Caco-2 (cell line): ENCODE measurements at regions of chr1 and their contacts with region 1.

Region 1: GRCh38 chr1:218345673-218346390 is 696 bp downstream of the TGFB2 start:
- DNase-seq: peak; percentile 63 to 66
- H3K4me3 ChIP-seq: peak overlapping the region; percentile 81
- H3K4me3 Mint-ChIP-seq: no peak overlapping the region
- H3K27ac Mint-ChIP-seq: no peak overlapping the region
- H3K4me1 ChIP-seq: peaks cover 14% of the 10 kb centered on the region
- H3K4me1 Mint-ChIP-seq: peaks cover 6% of the 10 kb centered on the region
- H3K27me3 ChIP-seq: no peaks in the 10 kb centered on the region
- H3K27me3 Mint-ChIP-seq: no peaks in the 10 kb centered on the region
- CTCF ChIP-seq: no peak

Region 2: GRCh38 chr1:218330043-218330623 is 15.7 kb before region 1 on chr1:
- CTCF ChIA-PET with region 1: no interaction called
- POLR2A ChIA-PET with region 1: no interaction called
- intact Hi-C with region 1: loop called (anchors 1 kb)
- DNase-seq: peak in 1 of 2 experiments; percentile 9
- H3K4me3 ChIP-seq: no peak overlapping the region
- H3K4me3 Mint-ChIP-seq: no peak overlapping the region
- H3K27ac Mint-ChIP-seq: no peak overlapping the region
- H3K4me1 ChIP-seq: no peaks in the 10 kb centered on the region
- H3K4me1 Mint-ChIP-seq: no peaks in the 10 kb centered on the region
- H3K27me3 ChIP-seq: no peaks in the 10 kb centered on the region
- H3K27me3 Mint-ChIP-seq: no peaks in the 10 kb centered on the region
- CTCF ChIP-seq: peak; percentile 28 to 69

Region 3: GRCh38 chr1:218380151-218380977 is 34.5 kb after region 1 on chr1:
- CTCF ChIA-PET with region 1: interaction called, 7 read pairs
- POLR2A ChIA-PET with region 1: interaction called, 4 read pairs
- intact Hi-C with region 1: loop called (anchors 2 kb)
- DNase-seq: peak; percentile 79 to 82
- H3K4me3 ChIP-seq: no peak overlapping the region
- H3K4me3 Mint-ChIP-seq: peak overlapping the region; percentile 20
- H3K27ac Mint-ChIP-seq: peak overlapping the region; percentile 89
- H3K4me1 ChIP-seq: peaks cover 49% of the 10 kb centered on the region
- H3K4me1 Mint-ChIP-seq: peaks cover 30% of the 10 kb centered on the region
- H3K27me3 ChIP-seq: no peaks in the 10 kb centered on the region
- H3K27me3 Mint-ChIP-seq: no peaks in the 10 kb centered on the region
- CTCF ChIP-seq: no peak

Region 4: DNA sequence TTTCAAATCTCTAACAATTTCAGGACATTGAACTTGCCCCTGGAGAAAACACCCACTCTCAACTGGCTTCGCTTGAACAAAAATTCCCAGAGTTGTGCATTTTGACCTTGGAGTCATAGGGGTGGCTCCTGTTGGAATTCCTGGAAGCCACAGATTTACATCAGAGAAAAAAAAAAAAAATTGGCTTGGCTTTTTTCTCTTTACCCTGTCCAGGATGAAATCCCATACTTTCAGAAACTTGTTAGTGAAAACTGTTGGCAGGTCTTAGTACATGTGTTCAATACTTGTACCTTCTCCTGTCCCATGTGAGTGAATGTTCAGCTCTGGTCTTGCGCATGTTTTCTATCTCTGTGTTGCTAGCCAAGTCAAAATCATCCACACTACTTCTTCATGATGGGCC is 228.1 kb after region 1 on chr1:
- CTCF ChIA-PET with region 1: no interaction called
- POLR2A ChIA-PET with region 1: interaction called, 10 read pairs
- intact Hi-C with region 1: no loop called
- DNase-seq: no peak
- H3K4me3 ChIP-seq: no peak overlapping the region
- H3K4me3 Mint-ChIP-seq: no peak overlapping the region
- H3K27ac Mint-ChIP-seq: no peak overlapping the region
- H3K4me1 ChIP-seq: peaks cover 8% of the 10 kb centered on the region; the same call in 1 of the 2 replicates
- H3K4me1 Mint-ChIP-seq: no peaks in the 10 kb centered on the region
- H3K27me3 ChIP-seq: no peaks in the 10 kb centered on the region
- H3K27me3 Mint-ChIP-seq: no peaks in the 10 kb centered on the region
- CTCF ChIP-seq: no peak

Region 5: DNA sequence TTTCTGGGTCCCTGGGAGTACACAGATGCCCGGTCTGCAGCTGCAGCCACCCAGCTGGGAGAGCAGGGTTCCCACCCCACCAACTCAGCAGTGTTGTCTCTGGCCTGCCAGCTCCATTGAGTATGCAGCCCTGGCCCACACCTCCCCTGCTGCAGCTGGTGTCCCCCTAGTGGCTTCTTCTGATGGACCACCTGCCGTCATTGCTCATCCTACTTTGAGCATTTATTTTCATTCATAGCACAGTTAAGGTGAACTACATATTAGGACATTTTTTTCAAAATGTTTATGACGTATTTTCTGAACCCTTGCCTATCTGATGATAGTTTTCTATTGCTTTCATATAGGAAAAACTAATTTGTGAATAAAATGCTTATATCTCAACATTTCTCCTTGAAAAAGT is 638.1 kb after region 1 on chr1:
- CTCF ChIA-PET with region 1: no interaction called
- POLR2A ChIA-PET with region 1: no interaction called
- intact Hi-C with region 1: loop called (anchors 5 kb)
- DNase-seq: peak in 1 of 2 experiments; percentile 44
- H3K4me3 ChIP-seq: no peak overlapping the region
- H3K4me3 Mint-ChIP-seq: no peak overlapping the region
- H3K27ac Mint-ChIP-seq: no peak overlapping the region
- H3K4me1 ChIP-seq: no peaks in the 10 kb centered on the region
- H3K4me1 Mint-ChIP-seq: no peaks in the 10 kb centered on the region
- H3K27me3 ChIP-seq: no peaks in the 10 kb centered on the region
- H3K27me3 Mint-ChIP-seq: no peaks in the 10 kb centered on the region
- CTCF ChIP-seq: peak; percentile 44 to 49